HEK293T (cell line): ENCODE measurements at regions of chr4 and their contacts with region 1.

Region 1: DNA sequence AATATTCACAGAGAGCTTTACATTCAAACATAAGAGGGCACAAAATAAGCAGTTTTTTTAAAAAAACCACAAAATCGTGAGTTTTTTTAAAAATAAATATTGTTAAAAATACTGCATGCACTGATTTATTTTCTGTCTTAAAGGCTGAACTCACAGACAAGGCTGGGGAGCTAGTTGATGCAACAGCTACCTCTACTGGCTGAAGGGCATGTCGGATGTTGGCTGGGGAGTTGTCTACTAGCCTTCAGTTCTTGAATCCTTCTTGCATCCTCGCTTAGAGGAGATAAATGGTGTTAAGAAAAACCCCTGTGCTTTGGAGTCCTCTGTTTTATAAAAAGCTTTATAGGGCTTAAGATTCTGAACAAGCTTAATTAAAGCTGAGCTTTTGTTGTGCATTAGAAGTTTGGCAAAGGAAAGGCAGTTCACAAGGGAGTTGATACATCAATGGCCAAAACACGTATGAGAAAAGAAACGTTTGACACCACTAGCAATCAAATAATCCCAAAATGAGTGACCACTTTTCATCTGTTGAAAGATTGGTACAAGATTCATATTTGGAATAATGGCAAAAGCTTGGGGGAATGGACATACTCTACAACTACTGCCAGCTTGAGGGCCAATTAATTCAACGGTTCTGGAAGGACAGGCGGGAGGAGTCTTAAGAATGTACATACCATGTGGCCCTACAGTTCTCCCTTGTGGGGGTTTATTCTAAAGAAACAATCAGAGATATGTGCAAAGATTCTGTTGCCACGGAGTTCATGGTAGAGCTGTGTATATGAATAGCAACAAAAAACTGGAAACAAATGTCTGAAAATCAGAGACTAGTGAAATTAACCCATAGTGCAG is 94.7 kb downstream of the SEL1L3 start:
- DNase-seq: peak; percentile 62

Region 2: GRCh38 chr4:25439918-25440477 is 328.1 kb before region 1 on chr4:
- CTCF ChIA-PET with region 1: interaction called, 31 read pairs
- POLR2A ChIA-PET with region 1: no interaction called
- DNase-seq: peak; percentile 60

Region 3: DNA sequence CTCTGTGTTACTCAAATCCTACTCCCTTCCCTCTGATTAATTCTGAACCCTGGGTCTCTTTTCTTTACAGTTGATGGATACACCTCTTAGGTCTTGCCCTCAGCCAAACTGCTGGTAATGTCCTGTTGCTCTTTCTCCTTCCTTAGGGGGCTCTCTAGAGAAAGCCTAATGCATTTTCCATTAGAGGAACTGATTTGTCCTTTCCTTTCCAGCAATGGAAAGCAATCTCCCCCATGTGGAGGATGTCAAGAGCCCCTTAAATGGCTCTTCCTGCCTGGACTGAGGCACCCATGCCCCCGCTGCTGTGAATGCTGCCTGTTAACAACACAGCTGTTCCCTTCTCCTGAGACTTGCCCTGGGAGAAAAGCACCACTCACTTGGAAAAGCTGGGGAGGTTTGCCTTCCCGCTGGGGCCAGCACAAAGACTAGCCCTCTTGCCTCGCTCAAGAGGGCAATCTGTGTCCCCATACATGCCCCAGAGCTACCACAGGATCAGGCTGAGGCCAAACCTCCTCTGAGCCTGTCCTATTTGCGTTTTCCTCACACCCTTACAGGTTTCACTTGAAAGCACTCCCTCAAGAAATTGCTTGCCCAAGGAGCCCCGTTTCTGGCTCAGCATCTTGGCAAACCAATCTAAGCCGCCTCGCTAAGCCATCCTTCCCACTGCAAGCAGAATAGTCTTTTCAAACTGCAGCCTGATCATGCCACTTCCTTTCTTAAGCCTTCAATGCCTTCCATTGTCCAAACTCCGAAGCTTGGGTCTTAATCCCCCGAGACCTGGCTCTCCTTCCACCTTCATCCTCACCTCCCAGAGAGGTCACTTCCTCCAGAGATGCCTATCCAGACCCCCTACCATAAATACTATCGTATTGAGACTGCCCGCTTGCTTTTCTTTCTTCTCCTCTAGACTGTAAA is 122.7 kb after region 1 on chr4:
- CTCF ChIA-PET with region 1: no interaction called
- POLR2A ChIA-PET with region 1: no interaction called
- DNase-seq: no peak